WTC11 (cell line): ENCODE measurements at regions of chr1 and their contacts with region 1.

Region 1: GRCh38 chr1:7207875-7208646 is 422.8 kb downstream of the CAMTA1 start:
- DNase-seq: peak; percentile 87
- ATAC-seq: peak; percentile 99
- H3K4me3 Mint-ChIP-seq: no peak overlapping the region
- H3K27ac Mint-ChIP-seq: peak overlapping the region; percentile 61
- H3K4me1 Mint-ChIP-seq: peaks cover 3% of the 10 kb centered on the region
- H3K27me3 Mint-ChIP-seq: no peaks in the 10 kb centered on the region
- CTCF ChIP-seq: peak; percentile 78

Region 2: GRCh38 chr1:6724516-6725141 is 483.4 kb before region 1 on chr1:
- CTCF ChIA-PET with region 1: interaction called, 20 read pairs
- POLR2A ChIA-PET with region 1: no interaction called
- DNase-seq: no peak
- ATAC-seq: no peak
- H3K4me3 Mint-ChIP-seq: no peak overlapping the region
- H3K27ac Mint-ChIP-seq: no peak overlapping the region
- H3K4me1 Mint-ChIP-seq: peaks cover 14% of the 10 kb centered on the region
- H3K27me3 Mint-ChIP-seq: peaks cover 7% of the 10 kb centered on the region
- CTCF ChIP-seq: no peak

Region 3: GRCh38 chr1:6962996-6963911 is 244.8 kb before region 1 on chr1:
- CTCF ChIA-PET with region 1: interaction called, 17 read pairs
- POLR2A ChIA-PET with region 1: no interaction called
- DNase-seq: peak; percentile 100
- ATAC-seq: peak; percentile 87
- H3K4me3 Mint-ChIP-seq: peak overlapping the region; percentile 72
- H3K27ac Mint-ChIP-seq: 0 out of 2 replicates have a peak overlapping the region, but pooled peaks have one; percentile 76
- H3K4me1 Mint-ChIP-seq: peaks cover 39% of the 10 kb centered on the region
- H3K27me3 Mint-ChIP-seq: peaks cover 3% of the 10 kb centered on the region
- CTCF ChIP-seq: no peak

Region 4: DNA sequence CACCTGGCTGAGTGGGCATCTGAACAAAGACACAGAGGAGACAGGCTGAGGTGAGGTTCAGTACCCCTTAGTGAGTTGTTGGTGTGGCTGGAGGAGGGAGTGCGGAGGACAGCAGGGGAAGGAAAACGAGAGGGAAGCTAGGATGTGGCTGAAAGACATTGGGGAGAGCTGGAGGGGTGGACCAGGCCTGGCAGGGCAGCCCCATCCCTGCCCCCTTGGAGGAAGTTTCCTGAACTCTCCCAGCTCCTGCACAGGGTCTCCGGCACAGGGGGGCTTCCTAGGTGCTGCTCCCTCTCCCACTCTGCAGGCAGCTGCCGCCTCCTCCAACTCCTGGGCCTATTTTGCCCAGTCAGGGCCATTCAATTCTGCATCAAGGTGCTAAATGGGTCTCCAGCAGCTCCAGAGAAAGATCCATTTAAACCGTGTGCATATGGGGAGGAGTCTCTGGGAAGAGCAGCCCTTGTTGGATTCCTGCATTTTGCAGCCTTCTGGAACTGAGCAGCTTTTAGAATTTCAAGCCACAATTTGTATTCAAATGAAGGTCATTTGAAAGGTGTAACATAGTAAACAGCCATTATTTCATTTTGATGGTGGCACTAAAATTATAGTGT is 229.0 kb before region 1 on chr1:
- CTCF ChIA-PET with region 1: interaction called, 10 read pairs
- POLR2A ChIA-PET with region 1: no interaction called
- DNase-seq: no peak
- ATAC-seq: peak; percentile 72
- H3K4me3 Mint-ChIP-seq: peak overlapping the region; percentile 2; the same call in 1 of the 2 replicates
- H3K27ac Mint-ChIP-seq: peak overlapping the region; percentile 41
- H3K4me1 Mint-ChIP-seq: peaks cover 40% of the 10 kb centered on the region
- H3K27me3 Mint-ChIP-seq: no peaks in the 10 kb centered on the region
- CTCF ChIP-seq: no peak

Region 5: GRCh38 chr1:7117599-7118281 is 90.3 kb before region 1 on chr1:
- CTCF ChIA-PET with region 1: interaction called, 12 read pairs
- POLR2A ChIA-PET with region 1: no interaction called
- DNase-seq: peak; percentile 55
- ATAC-seq: peak; percentile 96
- H3K4me3 Mint-ChIP-seq: no peak overlapping the region; the same call in 1 of the 2 replicates
- H3K27ac Mint-ChIP-seq: peak overlapping the region; percentile 86
- H3K4me1 Mint-ChIP-seq: peaks cover 21% of the 10 kb centered on the region
- H3K27me3 Mint-ChIP-seq: no peaks in the 10 kb centered on the region
- CTCF ChIP-seq: no peak

Region 6: DNA sequence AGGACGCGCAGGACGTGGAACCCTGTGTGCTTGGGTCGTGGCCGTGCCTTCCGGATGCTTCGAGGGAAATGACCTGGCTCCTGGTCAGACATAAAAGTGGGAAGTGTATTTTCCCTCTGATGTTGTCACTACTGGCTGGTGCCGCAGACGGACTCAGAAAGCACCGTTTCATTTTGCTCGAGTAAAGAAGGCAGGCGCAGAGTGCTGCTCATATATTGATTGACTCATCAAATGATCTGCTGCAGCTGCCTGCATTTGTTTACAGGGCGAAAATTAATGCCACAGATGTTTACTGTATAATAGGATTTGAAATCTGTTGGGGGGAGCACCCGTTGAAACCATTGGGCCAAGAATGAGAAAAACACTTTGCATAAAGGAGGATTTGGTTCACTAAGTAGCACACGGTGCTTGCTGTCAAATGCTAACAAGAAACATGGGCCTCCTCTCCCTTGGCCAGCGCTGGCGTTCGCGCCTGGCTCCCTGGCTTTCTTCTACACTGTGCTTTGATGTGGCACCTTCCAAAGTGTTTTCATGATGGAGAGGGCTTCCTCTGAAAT is 57.3 kb before region 1 on chr1:
- CTCF ChIA-PET with region 1: interaction called, 15 read pairs
- POLR2A ChIA-PET with region 1: no interaction called
- DNase-seq: no peak
- ATAC-seq: no peak
- H3K4me3 Mint-ChIP-seq: no peak overlapping the region
- H3K27ac Mint-ChIP-seq: no peak overlapping the region
- H3K4me1 Mint-ChIP-seq: peaks cover 53% of the 10 kb centered on the region; the same call in 1 of the 2 replicates
- H3K27me3 Mint-ChIP-seq: peaks cover 2% of the 10 kb centered on the region; the same call in 1 of the 2 replicates
- CTCF ChIP-seq: no peak

Region 7: GRCh38 chr1:7281821-7282220 is 73.8 kb after region 1 on chr1:
- CTCF ChIA-PET with region 1: no interaction called
- POLR2A ChIA-PET with region 1: no interaction called
- DNase-seq: no peak
- ATAC-seq: no peak; the same call in 1 of the 2 replicates
- H3K4me3 Mint-ChIP-seq: no peak overlapping the region
- H3K27ac Mint-ChIP-seq: no peak overlapping the region
- H3K4me1 Mint-ChIP-seq: peaks cover 55% of the 10 kb centered on the region
- H3K27me3 Mint-ChIP-seq: no peaks in the 10 kb centered on the region; the same call in 1 of the 2 replicates
- CTCF ChIP-seq: no peak